ENCODE measurements at regions of chr10 and their contacts with region 1.

Region 1: DNA sequence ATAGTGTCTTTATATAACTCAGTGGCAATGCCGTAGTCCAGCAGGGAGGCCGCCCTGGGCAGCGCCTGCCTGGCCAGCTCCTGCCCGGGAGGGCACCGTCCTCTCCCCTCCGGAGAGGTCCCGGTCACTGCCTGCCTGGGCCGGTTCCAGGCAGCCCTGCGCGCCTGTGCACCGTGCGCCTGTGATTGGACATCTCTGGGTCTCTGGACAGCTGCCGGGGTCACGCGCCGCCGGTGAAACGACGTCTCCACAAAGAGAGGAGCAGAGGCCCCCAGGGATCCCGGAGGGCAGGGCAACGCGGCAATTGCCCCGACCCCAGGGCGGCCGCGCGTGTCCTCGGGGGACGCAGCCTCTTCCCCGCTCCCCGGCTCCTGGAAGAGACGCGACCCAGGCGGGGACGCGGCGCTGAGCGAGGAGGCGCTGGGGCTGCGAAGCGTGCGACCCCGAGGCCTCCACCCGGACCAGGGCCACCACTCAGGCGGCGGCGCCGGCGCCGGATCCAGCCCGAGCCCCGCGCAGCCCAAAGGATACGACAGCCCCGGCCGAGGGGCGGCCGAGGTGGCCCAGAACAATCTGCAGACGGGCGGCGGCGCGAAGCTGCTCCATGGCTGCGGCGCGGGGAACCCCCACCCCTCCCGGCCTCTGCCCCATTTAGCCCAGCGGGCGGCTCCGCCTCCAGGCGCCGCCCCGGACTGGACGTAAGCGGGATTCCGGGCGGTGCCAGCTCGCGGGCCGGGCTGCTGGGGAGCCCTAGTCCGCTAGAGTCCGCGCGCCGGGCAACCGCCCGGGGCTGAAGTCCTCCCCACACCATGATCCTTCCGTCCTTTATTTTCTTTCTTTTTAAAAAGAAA is at the start of gene PHYH:
- DNase-seq: peak; percentile 65 to 93 (median 80)
- ATAC-seq: peak; percentile 52
- H3K4me3 ChIP-seq: peak within 1 kb of the TSS; percentile 68 to 70
- H3K4me3 Mint-ChIP-seq: peak within 1 kb of the TSS; percentile 84
- H3K27ac ChIP-seq: peak within 1 kb of the TSS; percentile 81 to 91
- H3K27ac Mint-ChIP-seq: peak within 1 kb of the TSS; percentile 94
- H3K4me1 ChIP-seq: peaks cover 28% of the 10 kb centered on the region
- H3K4me1 Mint-ChIP-seq: peaks cover 26% of the 10 kb centered on the region
- H3K27me3 ChIP-seq: no peaks in the 10 kb centered on the region
- H3K27me3 Mint-ChIP-seq: no peaks in the 10 kb centered on the region
- CTCF ChIP-seq: no peak
- total RNA-seq, gene PHYH: 12.6 TPM

Region 2: DNA sequence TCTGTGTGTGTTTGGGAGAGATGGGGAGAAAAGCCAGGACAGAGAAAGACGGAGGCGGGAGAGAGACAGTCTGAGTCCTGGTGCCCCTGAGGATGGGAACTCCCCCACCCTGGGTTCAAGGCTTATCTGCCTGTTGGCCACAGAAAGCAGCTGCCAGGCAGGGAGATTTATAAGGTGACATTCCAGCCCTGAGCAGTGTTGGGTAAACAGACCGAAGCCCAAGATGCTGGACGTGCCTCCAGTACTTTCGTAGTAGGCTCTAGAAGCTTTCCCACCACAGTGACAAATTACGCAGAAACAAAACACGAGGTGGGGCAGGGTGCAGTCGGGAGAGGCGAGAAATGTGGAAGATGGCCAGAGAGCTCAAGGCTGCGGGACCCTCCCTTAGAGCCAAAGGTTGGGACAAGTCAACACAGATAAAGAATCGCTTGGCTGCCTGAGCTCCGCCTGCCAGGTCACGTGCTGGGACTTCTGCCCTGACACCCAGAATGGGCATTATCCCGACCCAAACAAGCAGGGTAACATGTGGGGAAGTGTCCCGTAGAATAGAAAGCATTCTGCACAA is 339.2 kb before region 1 on chr10:
- CTCF ChIA-PET with region 1: no interaction called
- POLR2A ChIA-PET with region 1: no interaction called
- intact Hi-C with region 1: no loop called
- DNase-seq: peak in 1 of 9 experiments; percentile 32
- ATAC-seq: no peak
- H3K4me3 ChIP-seq: no peak overlapping the region
- H3K4me3 Mint-ChIP-seq: no peak overlapping the region
- H3K27ac ChIP-seq: no peak overlapping the region
- H3K27ac Mint-ChIP-seq: no peak overlapping the region
- H3K4me1 ChIP-seq: no peaks in the 10 kb centered on the region
- H3K4me1 Mint-ChIP-seq: no peaks in the 10 kb centered on the region
- H3K27me3 ChIP-seq: no peaks in the 10 kb centered on the region
- H3K27me3 Mint-ChIP-seq: peaks cover 17% of the 10 kb centered on the region
- CTCF ChIP-seq: no peak

Region 3: GRCh38 chr10:13160934-13161856 is 138.5 kb before region 1 on chr10 and contains the start of gene MCM10:
- CTCF ChIA-PET with region 1: interaction called, 35 read pairs
- POLR2A ChIA-PET with region 1: interaction called, 26 read pairs
- intact Hi-C with region 1: loop called (anchors 1 kb)
- DNase-seq: peak; percentile 93 to 99 (median 98)
- ATAC-seq: peak; percentile 100
- H3K4me3 ChIP-seq: peak within 1 kb of the TSS; percentile 44 to 49
- H3K4me3 Mint-ChIP-seq: peak within 1 kb of the TSS; percentile 88
- H3K27ac ChIP-seq: peak within 1 kb of the TSS in 1 of 2 experiments; percentile 40
- H3K27ac Mint-ChIP-seq: peak within 1 kb of the TSS; percentile 86
- H3K4me1 ChIP-seq: peaks cover 10% of the 10 kb centered on the region
- H3K4me1 Mint-ChIP-seq: peaks cover 14% of the 10 kb centered on the region
- H3K27me3 ChIP-seq: no peaks in the 10 kb centered on the region
- H3K27me3 Mint-ChIP-seq: no peaks in the 10 kb centered on the region
- CTCF ChIP-seq: peak; percentile 96
- total RNA-seq, gene MCM10: 0.08 to 0.19 TPM

Region 4: GRCh38 chr10:13206546-13207443 is 92.9 kb before region 1 on chr10:
- CTCF ChIA-PET with region 1: interaction called, 7 read pairs
- POLR2A ChIA-PET with region 1: no interaction called
- intact Hi-C with region 1: loop called in 1 of 2 experiments (anchors 2 kb)
- DNase-seq: peak in 2 of 9 experiments; percentile 17 to 33
- ATAC-seq: no peak
- H3K4me3 ChIP-seq: no peak overlapping the region
- H3K4me3 Mint-ChIP-seq: no peak overlapping the region
- H3K27ac ChIP-seq: no peak overlapping the region
- H3K27ac Mint-ChIP-seq: no peak overlapping the region
- H3K4me1 ChIP-seq: no peaks in the 10 kb centered on the region
- H3K4me1 Mint-ChIP-seq: no peaks in the 10 kb centered on the region
- H3K27me3 ChIP-seq: no peaks in the 10 kb centered on the region
- H3K27me3 Mint-ChIP-seq: no peaks in the 10 kb centered on the region
- CTCF ChIP-seq: no peak

Region 5: GRCh38 chr10:13271552-13272163 is 28.0 kb before region 1 on chr10:
- CTCF ChIA-PET with region 1: interaction called, 10 read pairs
- POLR2A ChIA-PET with region 1: interaction called, 8 read pairs
- intact Hi-C with region 1: loop called (anchors 1 kb)
- DNase-seq: peak; percentile 19 to 72 (median 59)
- ATAC-seq: peak; percentile 81
- H3K4me3 ChIP-seq: no peak overlapping the region
- H3K4me3 Mint-ChIP-seq: peak overlapping the region; percentile 31
- H3K27ac ChIP-seq: no peak overlapping the region
- H3K27ac Mint-ChIP-seq: peak overlapping the region; percentile 76
- H3K4me1 ChIP-seq: no peaks in the 10 kb centered on the region
- H3K4me1 Mint-ChIP-seq: peaks cover 10% of the 10 kb centered on the region
- H3K27me3 ChIP-seq: no peaks in the 10 kb centered on the region
- H3K27me3 Mint-ChIP-seq: no peaks in the 10 kb centered on the region
- CTCF ChIP-seq: no peak

Region 6: DNA sequence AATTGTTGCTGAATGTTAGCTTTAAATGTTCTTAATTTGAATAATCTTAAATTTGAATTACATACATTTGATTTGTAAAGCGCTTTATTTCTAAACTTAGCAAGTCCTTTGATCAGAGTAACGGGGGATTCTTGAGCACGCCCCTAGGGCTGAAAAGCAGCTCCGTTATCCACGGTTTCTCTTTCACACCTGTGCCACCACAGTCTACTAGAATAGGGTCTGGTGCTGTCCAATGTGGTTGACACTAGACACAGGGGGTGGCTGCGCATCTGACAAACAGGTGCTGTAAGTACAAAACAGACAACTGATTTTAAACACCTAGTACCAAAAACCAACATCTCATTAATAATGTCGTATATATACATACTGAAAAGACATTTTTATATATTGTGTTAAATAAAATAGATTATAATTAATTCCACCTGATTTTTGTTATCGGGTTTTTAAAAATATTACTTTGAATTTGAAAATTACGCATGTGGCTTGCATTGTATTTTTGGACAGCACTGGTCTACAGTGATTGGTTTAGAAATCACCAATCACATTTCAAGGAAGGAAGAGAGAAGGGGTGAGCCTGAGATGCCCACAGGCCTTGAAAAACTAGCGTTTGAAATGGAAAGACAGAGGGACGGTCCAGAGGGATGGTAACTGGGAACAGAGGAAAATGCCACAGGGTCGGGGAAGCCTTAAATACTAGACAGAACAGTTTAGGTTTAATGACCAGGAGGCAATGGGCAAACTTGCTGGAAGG is 41.1 kb after region 1 on chr10:
- CTCF ChIA-PET with region 1: interaction called, 16 read pairs
- POLR2A ChIA-PET with region 1: interaction called, 9 read pairs
- intact Hi-C with region 1: no loop called
- DNase-seq: peak in 7 of 9 experiments; percentile 17 to 73 (median 55)
- ATAC-seq: peak; percentile 97
- H3K4me3 ChIP-seq: no peak overlapping the region
- H3K4me3 Mint-ChIP-seq: peak overlapping the region; percentile 62
- H3K27ac ChIP-seq: peak overlapping the region; percentile 8 to 35
- H3K27ac Mint-ChIP-seq: no peak overlapping the region
- H3K4me1 ChIP-seq: peaks cover 15% of the 10 kb centered on the region
- H3K4me1 Mint-ChIP-seq: peaks cover 38% of the 10 kb centered on the region
- H3K27me3 ChIP-seq: no peaks in the 10 kb centered on the region
- H3K27me3 Mint-ChIP-seq: no peaks in the 10 kb centered on the region
- CTCF ChIP-seq: no peak